ENCODE measurements at regions of chr12 and their contacts with region 1.

Region 1: DNA sequence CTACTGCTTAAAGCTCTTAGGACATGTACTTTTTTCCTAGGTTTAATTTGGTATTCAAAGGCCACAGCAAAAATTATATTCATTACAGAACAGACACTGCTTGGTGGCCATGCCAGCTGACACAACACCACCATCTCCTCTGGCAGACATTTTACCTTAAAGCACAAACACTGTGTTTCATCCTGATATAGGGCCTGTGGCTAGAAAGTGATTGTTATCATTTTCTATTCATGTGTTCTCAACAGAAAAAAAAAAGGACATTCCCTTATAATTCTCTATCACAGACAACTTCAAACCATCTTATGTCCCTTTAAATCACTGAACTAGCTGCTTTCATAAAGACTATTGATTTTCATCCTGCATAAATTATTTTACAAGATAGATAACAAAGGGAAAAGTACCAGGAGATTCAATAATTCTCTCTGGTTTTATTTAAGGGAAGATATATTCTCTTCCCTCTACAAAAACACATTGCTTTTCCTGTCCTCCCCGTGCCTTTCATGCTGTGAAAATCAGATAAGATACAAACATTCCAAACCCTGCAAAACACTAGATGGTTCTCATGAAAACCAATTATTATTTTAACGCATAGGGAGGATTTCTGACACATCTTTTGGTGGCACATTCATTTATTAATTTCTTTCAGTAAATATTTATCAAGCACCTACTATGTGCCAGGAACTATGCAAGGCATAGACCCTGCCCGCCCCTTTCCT is 139.3 kb upstream of the TMCC3 start:
- DNase-seq: no peak
- ATAC-seq: no peak
- H3K4me3 ChIP-seq: no peak overlapping the region
- H3K27ac ChIP-seq: no peak overlapping the region
- H3K4me1 ChIP-seq: peaks cover 16% of the 10 kb centered on the region
- H3K27me3 ChIP-seq: no peaks in the 10 kb centered on the region
- CTCF ChIP-seq: no peak
- EP300 ChIP-seq: no peak
- POLR2A ChIP-seq: no peak
- RAD21 ChIP-seq: no peak

Region 2: GRCh38 chr12:94689002-94689645 is 100.5 kb before region 1 on chr12:
- CTCF ChIA-PET with region 1: no interaction called
- POLR2A ChIA-PET with region 1: no interaction called
- RAD21 ChIA-PET with region 1: no interaction called
- SMC1A ChIA-PET with region 1: no interaction called
- in situ Hi-C with region 1: no loop called
- intact Hi-C with region 1: no loop called
- DNase-seq: no peak
- ATAC-seq: peak; percentile 61; the same call in 2 of the 3 replicates
- H3K4me3 ChIP-seq: no peak overlapping the region; the same call in 1 of the 2 replicates
- H3K27ac ChIP-seq: peak overlapping the region; percentile 10; the same call in 1 of the 2 replicates
- H3K4me1 ChIP-seq: peaks cover 11% of the 10 kb centered on the region
- H3K27me3 ChIP-seq: no peaks in the 10 kb centered on the region
- CTCF ChIP-seq: no peak
- EP300 ChIP-seq: no peak
- POLR2A ChIP-seq: no peak
- RAD21 ChIP-seq: no peak

Region 3: DNA sequence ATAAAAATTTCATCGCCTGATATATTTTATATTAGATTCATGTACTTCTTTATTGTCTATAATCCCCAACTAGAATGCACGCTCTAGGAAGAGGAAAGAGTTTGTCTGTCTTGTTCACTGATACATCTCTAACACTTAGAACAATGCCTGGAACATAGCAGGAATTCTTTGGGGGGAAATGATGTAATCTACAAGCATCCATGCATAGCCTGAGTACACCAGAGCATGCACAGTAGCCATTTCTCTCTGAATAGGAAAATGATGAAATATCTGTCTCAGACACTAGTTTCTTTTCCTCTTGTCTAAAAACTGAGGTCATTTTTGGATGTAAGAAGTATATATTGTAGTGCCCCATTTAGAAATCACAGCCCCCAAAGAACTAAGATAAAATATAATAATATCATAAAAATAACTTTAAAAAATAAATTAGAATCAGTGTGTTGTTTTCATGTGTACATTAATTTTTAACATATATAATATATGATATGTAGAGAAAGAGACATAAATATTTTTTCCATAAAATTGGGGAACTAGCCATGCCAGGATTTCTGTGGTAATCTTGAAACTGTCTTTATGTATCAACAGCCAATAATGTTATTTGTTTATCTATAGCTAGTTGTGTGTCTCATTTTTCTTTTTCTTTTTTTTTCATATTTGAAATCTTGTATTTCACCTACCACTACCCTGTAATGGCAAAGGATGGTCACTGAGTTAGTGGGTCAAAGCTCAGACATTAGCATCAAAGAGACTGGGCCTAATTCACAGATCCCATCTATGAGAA is 16.3 kb after region 1 on chr12:
- CTCF ChIA-PET with region 1: interaction called, 3 read pairs
- POLR2A ChIA-PET with region 1: interaction called, 10 read pairs
- RAD21 ChIA-PET with region 1: interaction called, 4 read pairs
- SMC1A ChIA-PET with region 1: interaction called, 12 read pairs
- in situ Hi-C with region 1: no loop called
- intact Hi-C with region 1: no loop called
- DNase-seq: no peak
- ATAC-seq: peak; percentile 80
- H3K4me3 ChIP-seq: no peak overlapping the region
- H3K27ac ChIP-seq: peak overlapping the region; percentile 17
- H3K4me1 ChIP-seq: peaks cover 21% of the 10 kb centered on the region
- H3K27me3 ChIP-seq: no peaks in the 10 kb centered on the region
- CTCF ChIP-seq: no peak
- EP300 ChIP-seq: no peak
- POLR2A ChIP-seq: no peak
- RAD21 ChIP-seq: no peak

Measured in GM12878 (cell line).